Activated CD4-positive, alpha-beta memory T cell treated with anti-CD3 and anti-CD28 coated beads for 36 hours (primary cell): ENCODE measurements at regions of chr1 and their contacts with region 1.

Region 1: DNA sequence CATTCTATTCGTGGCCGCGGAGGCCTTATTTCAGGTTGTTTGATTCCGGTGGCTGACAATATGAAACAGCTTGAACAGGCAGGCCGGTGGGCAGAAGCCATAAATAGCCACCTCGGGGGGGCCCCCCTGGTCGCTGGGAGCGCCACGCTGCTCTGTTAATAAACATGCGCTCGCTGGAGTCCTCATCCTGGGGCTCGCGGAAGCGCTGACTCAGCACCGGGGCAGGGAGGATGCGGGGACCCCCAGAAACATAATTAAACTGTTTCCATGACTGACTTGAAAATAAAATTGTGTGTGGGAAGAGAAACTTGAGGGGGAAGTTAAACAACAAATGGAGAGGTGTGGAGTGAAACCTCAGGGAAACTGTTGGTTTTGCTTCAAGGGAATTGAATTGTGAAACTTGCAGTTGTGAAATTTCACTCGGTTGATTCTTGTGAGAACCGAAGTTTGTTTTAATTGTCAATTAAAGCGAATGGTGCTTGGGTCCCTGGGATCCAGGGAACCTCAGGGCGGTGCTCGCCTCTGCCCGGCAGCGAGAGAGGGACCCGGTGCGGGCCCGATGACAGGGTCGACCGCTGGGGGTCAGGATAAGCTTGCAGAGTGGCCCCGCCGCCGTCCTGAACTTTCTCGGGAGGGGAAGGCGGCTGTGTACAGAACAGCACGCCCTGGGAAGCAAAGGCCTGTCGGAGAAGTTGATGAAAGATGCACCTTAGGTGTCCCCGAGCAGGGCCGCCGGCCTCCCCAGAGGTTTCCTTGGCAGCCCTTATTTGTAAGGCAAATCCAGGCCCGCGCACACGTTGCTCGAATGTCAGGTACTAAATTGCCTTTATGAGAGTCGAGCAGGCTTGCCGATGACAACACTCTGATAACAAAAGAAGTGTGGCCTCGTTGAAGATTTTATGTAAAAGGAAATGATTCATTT is 176.9 kb upstream of the LMO4 start:
- DNase-seq: peak; percentile 54
- H3K4me3 Mint-ChIP-seq: peak overlapping the region; percentile 54
- H3K27ac Mint-ChIP-seq: no peak overlapping the region
- H3K4me1 Mint-ChIP-seq: peaks cover 16% of the 10 kb centered on the region
- H3K27me3 Mint-ChIP-seq: peaks cover 54% of the 10 kb centered on the region

Region 2: DNA sequence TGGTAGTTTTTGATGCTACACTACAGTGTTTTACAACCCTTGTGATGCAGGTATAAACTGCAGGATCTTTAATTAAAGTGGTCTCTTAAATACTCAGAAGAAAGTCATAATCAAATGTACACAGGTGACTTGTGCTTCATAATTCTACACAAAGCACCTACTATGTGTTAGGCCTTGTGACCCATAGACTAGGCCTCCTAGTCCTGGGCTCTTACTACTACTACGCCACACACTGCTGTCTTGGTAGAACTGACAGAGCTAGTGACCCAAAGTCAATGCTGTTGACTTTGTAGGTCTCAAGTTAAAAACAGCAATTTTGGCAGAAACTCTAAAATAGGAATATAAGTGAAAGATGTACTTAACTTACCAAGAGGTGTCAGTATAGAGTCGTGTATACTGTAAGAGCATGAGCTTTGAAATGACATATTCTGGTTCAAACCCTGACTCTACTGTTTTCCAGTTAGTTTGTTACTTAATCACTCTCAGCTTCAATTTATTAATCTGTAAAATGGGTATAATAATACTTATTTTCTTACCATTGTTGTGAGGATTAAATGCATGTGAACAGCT is 128.3 kb after region 1 on chr1:
- CTCF ChIA-PET with region 1: no interaction called
- POLR2A ChIA-PET with region 1: no interaction called
- intact Hi-C with region 1: loop called (anchors 10 kb)
- DNase-seq: no peak
- H3K4me3 Mint-ChIP-seq: no peak overlapping the region
- H3K27ac Mint-ChIP-seq: no peak overlapping the region
- H3K4me1 Mint-ChIP-seq: no peaks in the 10 kb centered on the region
- H3K27me3 Mint-ChIP-seq: peaks cover 3% of the 10 kb centered on the region